CD8-positive, alpha-beta T cell (primary cell): ENCODE measurements at regions of chr14 and their contacts with region 1.

Region 1: DNA sequence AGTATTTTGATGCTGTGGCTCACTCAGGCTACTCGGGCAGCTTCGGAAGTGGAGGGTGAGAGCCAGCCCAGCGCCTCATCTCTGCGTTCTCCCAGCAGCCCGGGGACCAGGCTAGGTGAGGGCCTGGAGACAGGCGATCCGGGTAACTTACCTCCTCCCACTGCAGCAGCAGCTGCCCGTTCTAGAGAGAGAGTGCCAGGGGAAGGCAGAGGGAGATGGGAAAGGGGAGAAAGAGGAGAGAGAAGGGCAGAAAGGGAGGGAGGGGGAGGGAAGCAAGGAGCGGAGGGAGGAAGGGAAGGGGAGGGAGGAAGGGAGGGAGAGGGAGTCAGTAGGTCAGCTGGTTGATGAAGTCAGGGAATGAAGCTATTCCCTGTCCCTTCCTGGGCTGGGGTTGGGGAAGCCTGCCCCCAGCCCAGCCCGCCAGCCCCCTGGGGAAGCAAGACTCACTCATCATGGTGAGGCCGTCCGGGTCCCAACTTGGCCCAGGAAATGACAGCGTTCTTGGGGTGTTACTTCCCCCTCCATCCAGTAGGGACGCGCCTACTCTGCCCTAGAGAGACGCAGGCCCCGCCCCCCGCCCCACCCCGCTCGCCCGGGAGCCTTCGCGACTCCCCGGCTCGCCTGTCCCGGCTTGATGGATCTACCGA is at the start of gene IFI27L2:
- DNase-seq: peak; percentile 26 to 87 (median 65)
- ATAC-seq: peak; percentile 95
- H3K4me3 ChIP-seq: peak within 1 kb of the TSS; percentile 57 to 71
- H3K4me3 Mint-ChIP-seq: peak within 1 kb of the TSS; percentile 92
- H3K27ac ChIP-seq: peak within 1 kb of the TSS in 1 of 2 experiments; percentile 64
- H3K27ac Mint-ChIP-seq: peak within 1 kb of the TSS; percentile 83
- H3K4me1 ChIP-seq: peaks cover 16% of the 10 kb centered on the region
- H3K4me1 Mint-ChIP-seq: peaks cover 17% of the 10 kb centered on the region
- H3K27me3 ChIP-seq: no peaks in the 10 kb centered on the region
- H3K27me3 Mint-ChIP-seq: no peaks in the 10 kb centered on the region
- CTCF ChIP-seq: no peak
- total RNA-seq, gene IFI27L2: 13.3 to 16.4 TPM

Region 2: GRCh38 chr14:93986955-93987354 is 142.3 kb before region 1 on chr14:
- CTCF ChIA-PET with region 1: no interaction called
- POLR2A ChIA-PET with region 1: no interaction called
- intact Hi-C with region 1: no loop called
- DNase-seq: no peak
- ATAC-seq: no peak
- H3K4me3 ChIP-seq: no peak overlapping the region
- H3K4me3 Mint-ChIP-seq: no peak overlapping the region
- H3K27ac ChIP-seq: no peak overlapping the region
- H3K27ac Mint-ChIP-seq: no peak overlapping the region
- H3K4me1 ChIP-seq: no peaks in the 10 kb centered on the region
- H3K4me1 Mint-ChIP-seq: no peaks in the 10 kb centered on the region
- H3K27me3 ChIP-seq: no peaks in the 10 kb centered on the region
- H3K27me3 Mint-ChIP-seq: peaks cover 7% of the 10 kb centered on the region
- CTCF ChIP-seq: no peak

Region 3: DNA sequence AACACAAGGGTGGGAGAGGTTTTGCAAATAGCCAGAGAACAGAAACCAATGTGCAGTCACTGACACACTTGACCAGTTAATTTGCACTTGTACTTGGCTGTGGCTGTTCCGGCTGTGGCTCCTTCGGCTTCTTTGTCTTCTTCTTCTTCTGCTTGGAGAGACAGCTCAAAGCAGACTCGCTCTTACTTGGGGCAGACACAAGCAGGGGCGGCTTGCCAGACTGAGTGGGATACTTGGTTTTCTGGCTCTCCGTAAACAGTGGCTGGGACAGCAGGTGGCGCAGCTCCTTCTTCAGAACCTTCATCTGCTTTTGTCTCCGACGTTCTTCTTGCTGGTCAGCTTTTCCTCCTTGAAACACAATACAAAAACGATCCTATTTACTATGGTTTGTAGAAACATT is 78.1 kb before region 1 on chr14:
- CTCF ChIA-PET with region 1: interaction called, 12 read pairs
- POLR2A ChIA-PET with region 1: interaction called, 3 read pairs
- intact Hi-C with region 1: loop called in 1 of 2 experiments (anchors 2 kb)
- DNase-seq: peak in 2 of 9 experiments; percentile 5 to 6
- ATAC-seq: no peak
- H3K4me3 ChIP-seq: no peak overlapping the region
- H3K4me3 Mint-ChIP-seq: no peak overlapping the region
- H3K27ac ChIP-seq: no peak overlapping the region
- H3K27ac Mint-ChIP-seq: no peak overlapping the region
- H3K4me1 ChIP-seq: no peaks in the 10 kb centered on the region
- H3K4me1 Mint-ChIP-seq: peaks cover 15% of the 10 kb centered on the region
- H3K27me3 ChIP-seq: no peaks in the 10 kb centered on the region
- H3K27me3 Mint-ChIP-seq: no peaks in the 10 kb centered on the region
- CTCF ChIP-seq: no peak

Region 4: GRCh38 chr14:94080471-94081289 is 48.6 kb before region 1 on chr14 and contains the start of gene DDX24:
- CTCF ChIA-PET with region 1: interaction called, 8 read pairs
- POLR2A ChIA-PET with region 1: interaction called, 4 read pairs
- intact Hi-C with region 1: loop called (anchors 1 to 2 kb)
- DNase-seq: peak; percentile 94 to 99 (median 96)
- ATAC-seq: peak; percentile 93
- H3K4me3 ChIP-seq: peak within 1 kb of the TSS; percentile 72 to 87
- H3K4me3 Mint-ChIP-seq: peak within 1 kb of the TSS; percentile 99
- H3K27ac ChIP-seq: peak within 1 kb of the TSS; percentile 92 to 98
- H3K27ac Mint-ChIP-seq: peak within 1 kb of the TSS; percentile 99
- H3K4me1 ChIP-seq: peaks cover 38% of the 10 kb centered on the region
- H3K4me1 Mint-ChIP-seq: peaks cover 48% of the 10 kb centered on the region
- H3K27me3 ChIP-seq: no peaks in the 10 kb centered on the region
- H3K27me3 Mint-ChIP-seq: no peaks in the 10 kb centered on the region
- CTCF ChIP-seq: no peak
- total RNA-seq, gene DDX24: 769 to 779 TPM

Region 5: DNA sequence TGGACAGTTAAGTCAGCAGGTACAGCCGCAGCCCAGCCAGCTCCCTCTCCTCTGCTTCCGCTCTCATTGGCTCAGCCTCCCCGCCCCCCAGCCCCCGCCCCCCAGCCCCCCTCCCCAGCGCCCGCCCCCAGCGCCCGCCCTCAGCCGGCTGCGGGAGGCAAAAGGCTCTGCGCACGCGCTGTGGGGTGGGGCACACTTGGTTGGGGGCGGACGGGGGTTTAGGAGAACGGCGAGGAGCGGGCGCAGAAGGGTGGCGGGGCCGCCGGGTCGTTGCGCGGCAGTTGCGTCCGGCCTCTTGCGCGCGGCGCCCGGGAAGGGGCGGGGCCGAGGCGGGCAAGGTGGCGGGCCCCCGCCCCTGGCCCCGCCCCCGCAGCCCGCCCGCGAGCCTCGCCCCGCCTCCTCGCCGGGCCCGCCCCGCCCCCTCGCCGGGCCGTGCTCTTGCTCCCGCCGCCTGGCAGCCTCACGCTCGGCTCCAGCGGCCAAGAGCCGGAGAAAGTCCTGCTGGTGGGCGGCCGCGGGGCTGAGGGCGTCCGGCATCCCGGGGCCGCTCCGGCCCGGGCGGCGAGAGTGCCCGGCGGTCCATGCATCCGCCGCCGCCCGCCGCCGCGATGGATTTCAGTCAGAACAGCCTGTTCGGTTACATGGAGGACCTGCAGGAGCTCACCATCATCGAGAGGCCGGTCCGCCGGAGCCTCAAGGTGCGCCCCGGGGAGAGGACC is 44.8 kb after region 1 on chr14 and contains the start of gene PPP4R4:
- CTCF ChIA-PET with region 1: interaction called, 48 read pairs
- POLR2A ChIA-PET with region 1: no interaction called
- intact Hi-C with region 1: loop called in 1 of 2 experiments (anchors 1 kb)
- DNase-seq: peak; percentile 66 to 93 (median 84)
- ATAC-seq: peak; percentile 89
- H3K4me3 ChIP-seq: peak within 1 kb of the TSS; percentile 62 to 77
- H3K4me3 Mint-ChIP-seq: peak within 1 kb of the TSS; percentile 84
- H3K27ac ChIP-seq: no peak within 1 kb of the TSS
- H3K27ac Mint-ChIP-seq: no peak within 1 kb of the TSS
- H3K4me1 ChIP-seq: peaks cover 12% of the 10 kb centered on the region
- H3K4me1 Mint-ChIP-seq: peaks cover 18% of the 10 kb centered on the region
- H3K27me3 ChIP-seq: peaks cover 0 to 8% of the 10 kb centered on the region in 2 experiments
- H3K27me3 Mint-ChIP-seq: peaks cover 16% of the 10 kb centered on the region
- CTCF ChIP-seq: no peak
- total RNA-seq, gene PPP4R4: not detected

Region 6: GRCh38 chr14:94485944-94486841 is 357.0 kb after region 1 on chr14:
- CTCF ChIA-PET with region 1: interaction called, 3 read pairs
- POLR2A ChIA-PET with region 1: no interaction called
- intact Hi-C with region 1: loop called in 1 of 2 experiments (anchors 5 kb)
- DNase-seq: peak in 7 of 9 experiments; percentile 16 to 57 (median 35)
- ATAC-seq: no peak
- H3K4me3 ChIP-seq: no peak overlapping the region
- H3K4me3 Mint-ChIP-seq: no peak overlapping the region
- H3K27ac ChIP-seq: no peak overlapping the region
- H3K27ac Mint-ChIP-seq: no peak overlapping the region
- H3K4me1 ChIP-seq: peaks cover 7% of the 10 kb centered on the region
- H3K4me1 Mint-ChIP-seq: peaks cover 5% of the 10 kb centered on the region
- H3K27me3 ChIP-seq: peaks cover 0 to 6% of the 10 kb centered on the region in 2 experiments
- H3K27me3 Mint-ChIP-seq: peaks cover 27% of the 10 kb centered on the region
- CTCF ChIP-seq: peak; percentile 85